AG04450 (cell line): ENCODE measurements at regions of chr3 and their contacts with region 1.

Region 1: DNA sequence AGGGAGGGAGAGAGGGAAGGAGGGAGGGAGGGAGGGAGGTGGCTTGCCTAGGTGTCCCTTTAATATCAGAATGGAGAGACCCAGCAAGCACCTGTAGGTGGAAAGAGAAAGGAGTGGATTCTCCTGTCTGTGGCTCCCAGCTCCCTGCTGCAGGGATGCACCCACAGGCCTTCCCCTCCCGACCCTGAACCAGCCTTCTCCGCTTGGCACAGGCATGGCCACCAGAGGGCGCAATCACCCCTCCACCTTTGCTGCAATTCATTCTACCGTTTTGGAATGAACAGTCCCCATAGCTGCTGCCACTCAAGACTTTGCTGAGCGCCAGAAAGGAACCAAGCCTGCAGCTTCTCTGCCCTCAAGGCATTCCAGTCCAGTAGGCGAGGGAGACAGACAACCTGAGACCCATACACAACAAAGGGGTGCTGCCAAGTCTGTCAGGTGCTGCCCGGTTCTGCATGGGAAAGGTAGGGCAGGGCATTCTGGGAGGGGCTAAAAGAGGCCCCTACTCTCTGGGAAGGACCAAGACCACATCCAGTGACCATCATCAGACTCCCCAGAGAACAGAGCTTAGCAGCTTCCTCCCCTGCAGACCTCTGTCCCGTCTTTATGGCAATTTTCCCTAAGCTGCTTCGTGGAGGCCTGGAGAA is 4.9 kb downstream of the TLR9 start:
- DNase-seq: no peak
- H3K4me3 ChIP-seq: no peak overlapping the region
- H3K27ac ChIP-seq: no peak overlapping the region
- H3K27me3 ChIP-seq: no peaks in the 10 kb centered on the region
- CTCF ChIP-seq: peak; percentile 97

Region 2: DNA sequence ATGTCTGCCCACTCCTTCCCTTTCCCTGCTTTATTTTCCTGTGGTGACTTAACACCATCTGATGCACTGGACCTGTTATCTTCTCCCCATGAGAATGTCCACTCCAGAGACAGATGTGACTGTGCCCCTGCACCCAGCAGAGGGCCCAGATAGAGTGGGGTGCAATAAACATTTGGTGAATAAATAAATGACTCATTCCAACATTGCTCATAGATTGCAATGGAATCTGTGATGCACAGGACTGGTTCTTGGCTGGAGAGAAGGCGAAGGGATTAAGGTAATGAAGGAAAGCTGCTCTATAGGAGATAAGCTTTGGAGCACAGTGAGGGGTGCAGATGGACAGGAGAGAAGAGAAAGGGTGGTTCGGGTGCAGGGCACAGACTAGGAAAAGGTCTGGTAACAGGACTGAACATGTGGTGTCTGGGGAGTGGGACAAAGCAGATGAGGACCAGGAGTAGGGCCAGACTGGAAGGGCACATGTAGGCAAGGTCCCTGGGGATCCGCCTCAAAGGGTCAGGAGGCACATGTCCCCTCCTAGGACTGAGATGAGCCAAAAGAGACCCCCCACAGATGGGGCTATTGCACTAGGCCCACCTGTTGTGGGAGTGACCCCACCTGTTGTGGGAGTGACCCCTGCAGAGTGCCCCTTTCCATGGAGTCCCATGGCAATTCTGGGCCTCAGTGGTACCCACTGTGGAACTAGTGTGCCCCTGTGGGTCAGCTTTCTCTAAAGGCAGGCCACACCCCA is 48.8 kb before region 1 on chr3:
- CTCF ChIA-PET with region 1: interaction called, 16 read pairs
- POLR2A ChIA-PET with region 1: no interaction called
- DNase-seq: no peak
- H3K4me3 ChIP-seq: no peak overlapping the region
- H3K27ac ChIP-seq: peak overlapping the region; percentile 39
- H3K27me3 ChIP-seq: no peaks in the 10 kb centered on the region
- CTCF ChIP-seq: peak; percentile 41; the same call in 1 of the 2 replicates

Region 3: DNA sequence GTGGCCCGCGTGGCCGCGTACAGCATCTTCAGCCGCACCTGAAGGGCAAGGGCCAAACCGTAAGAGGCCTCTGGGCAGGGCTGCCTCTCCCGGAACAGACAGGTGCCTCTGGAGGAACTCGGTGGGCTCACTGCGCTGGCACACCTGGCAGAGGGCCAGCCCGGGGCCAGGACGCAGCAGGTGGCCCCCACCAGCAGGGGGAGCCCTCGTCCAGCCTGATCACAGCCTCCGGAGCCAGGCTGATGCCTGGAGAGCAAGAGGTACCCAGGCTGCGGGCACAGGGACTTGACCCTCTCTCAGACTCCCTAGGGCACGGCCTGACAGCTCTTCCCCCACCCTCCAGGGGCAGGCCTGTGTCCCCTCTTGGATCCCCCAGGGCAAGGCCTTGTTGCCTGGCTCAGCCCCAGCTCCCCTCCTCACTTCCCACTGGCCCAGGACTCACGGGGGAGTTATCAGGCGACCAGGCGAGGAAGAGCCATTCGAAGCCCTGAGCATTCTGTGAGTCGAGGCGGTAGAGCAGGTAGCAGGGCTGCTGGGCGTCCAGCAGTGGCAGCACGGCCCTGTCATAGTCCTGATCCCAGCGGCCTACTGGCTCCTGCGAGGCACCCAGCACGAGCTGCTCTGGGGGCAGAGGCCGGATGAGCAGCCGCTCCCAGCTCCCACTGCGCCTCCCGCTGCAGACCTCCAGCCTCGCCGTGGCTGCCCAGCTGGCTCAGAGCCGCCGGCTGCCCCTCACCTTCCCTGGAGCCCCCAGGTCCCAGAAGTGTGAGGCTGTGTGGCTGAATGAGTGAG is 11.2 kb after region 1 on chr3:
- CTCF ChIA-PET with region 1: interaction called, 52 read pairs
- POLR2A ChIA-PET with region 1: no interaction called
- DNase-seq: no peak
- H3K4me3 ChIP-seq: no peak overlapping the region
- H3K27ac ChIP-seq: no peak overlapping the region
- H3K27me3 ChIP-seq: no peaks in the 10 kb centered on the region
- CTCF ChIP-seq: peak; percentile 68

Region 4: DNA sequence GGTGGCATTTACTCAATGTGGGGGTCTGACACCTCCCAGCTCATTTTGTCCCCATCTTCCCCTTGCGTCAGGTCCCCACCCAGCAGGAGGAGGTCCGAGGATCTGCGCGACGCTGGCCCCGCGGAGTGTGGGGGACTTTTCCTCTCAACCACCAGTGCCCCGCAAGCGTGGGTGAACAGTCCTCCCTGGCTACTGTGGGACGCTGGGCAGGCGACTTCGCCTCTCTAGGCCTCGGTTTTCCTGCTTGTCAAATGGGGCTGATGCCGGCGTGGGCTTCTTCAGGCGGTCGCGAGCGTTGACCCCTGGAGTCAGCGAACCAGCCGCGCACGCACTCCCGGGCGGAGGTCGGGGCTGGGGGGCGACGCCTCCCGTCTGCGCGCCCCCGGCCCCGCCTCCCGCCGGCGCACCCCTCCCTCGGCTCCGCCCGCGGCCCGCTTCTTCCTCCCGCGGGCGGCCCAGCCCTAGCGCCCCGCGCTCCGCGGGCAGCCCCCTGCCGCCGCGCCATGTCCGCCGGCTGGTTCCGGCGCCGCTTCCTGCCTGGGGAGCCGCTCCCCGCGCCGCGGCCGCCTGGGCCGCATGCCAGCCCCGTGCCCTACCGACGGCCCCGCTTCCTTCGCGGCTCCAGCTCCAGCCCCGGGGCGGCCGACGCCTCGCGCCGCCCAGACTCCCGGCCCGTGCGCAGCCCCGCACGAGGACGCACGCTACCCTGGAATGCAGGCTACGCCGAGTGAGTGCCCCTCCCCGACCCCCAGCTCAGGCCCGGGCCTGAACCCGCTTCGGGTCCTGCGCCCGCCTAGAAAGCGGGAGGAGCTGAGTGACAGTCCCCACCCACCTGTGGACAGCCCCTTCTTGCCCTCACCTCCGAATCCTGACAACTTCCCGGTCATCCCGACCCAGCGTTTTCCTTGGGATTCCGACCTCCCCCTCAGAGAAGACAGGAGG is 25.1 kb after region 1 on chr3 and contains the start of gene PPM1M:
- CTCF ChIA-PET with region 1: interaction called, 17 read pairs
- POLR2A ChIA-PET with region 1: interaction called, 5 read pairs
- DNase-seq: no peak
- H3K4me3 ChIP-seq: peak within 1 kb of the TSS; percentile 67
- H3K27ac ChIP-seq: peak within 1 kb of the TSS; percentile 47
- H3K27me3 ChIP-seq: no peaks in the 10 kb centered on the region
- CTCF ChIP-seq: no peak
- polyA plus RNA-seq, gene PPM1M: 29.2 and 34.4 TPM in 2 replicates

Region 5: GRCh38 chr3:52278510-52279069 is 58.1 kb after region 1 on chr3 and contains the start of gene WDR82:
- CTCF ChIA-PET with region 1: interaction called, 37 read pairs
- POLR2A ChIA-PET with region 1: no interaction called
- DNase-seq: peak; percentile 74
- H3K4me3 ChIP-seq: peak within 1 kb of the TSS; percentile 99
- H3K27ac ChIP-seq: peak within 1 kb of the TSS; percentile 90
- H3K27me3 ChIP-seq: no peaks in the 10 kb centered on the region
- CTCF ChIP-seq: peak; percentile 53
- polyA plus RNA-seq, gene WDR82: 69.2 and 77.6 TPM in 2 replicates

Region 6: GRCh38 chr3:52346623-52347530 is 126.4 kb after region 1 on chr3:
- CTCF ChIA-PET with region 1: interaction called, 128 read pairs
- POLR2A ChIA-PET with region 1: no interaction called
- DNase-seq: peak; percentile 23
- H3K4me3 ChIP-seq: no peak overlapping the region
- H3K27ac ChIP-seq: no peak overlapping the region
- H3K27me3 ChIP-seq: no peaks in the 10 kb centered on the region
- CTCF ChIP-seq: no peak

Region 7: GRCh38 chr3:52372822-52373504 is 152.5 kb after region 1 on chr3:
- CTCF ChIA-PET with region 1: no interaction called
- POLR2A ChIA-PET with region 1: no interaction called
- DNase-seq: no peak
- H3K4me3 ChIP-seq: no peak overlapping the region
- H3K27ac ChIP-seq: no peak overlapping the region
- H3K27me3 ChIP-seq: peaks cover 10% of the 10 kb centered on the region
- CTCF ChIP-seq: no peak